ENCODE measurements at regions of chr1 and their contacts with region 1.

Region 1: DNA sequence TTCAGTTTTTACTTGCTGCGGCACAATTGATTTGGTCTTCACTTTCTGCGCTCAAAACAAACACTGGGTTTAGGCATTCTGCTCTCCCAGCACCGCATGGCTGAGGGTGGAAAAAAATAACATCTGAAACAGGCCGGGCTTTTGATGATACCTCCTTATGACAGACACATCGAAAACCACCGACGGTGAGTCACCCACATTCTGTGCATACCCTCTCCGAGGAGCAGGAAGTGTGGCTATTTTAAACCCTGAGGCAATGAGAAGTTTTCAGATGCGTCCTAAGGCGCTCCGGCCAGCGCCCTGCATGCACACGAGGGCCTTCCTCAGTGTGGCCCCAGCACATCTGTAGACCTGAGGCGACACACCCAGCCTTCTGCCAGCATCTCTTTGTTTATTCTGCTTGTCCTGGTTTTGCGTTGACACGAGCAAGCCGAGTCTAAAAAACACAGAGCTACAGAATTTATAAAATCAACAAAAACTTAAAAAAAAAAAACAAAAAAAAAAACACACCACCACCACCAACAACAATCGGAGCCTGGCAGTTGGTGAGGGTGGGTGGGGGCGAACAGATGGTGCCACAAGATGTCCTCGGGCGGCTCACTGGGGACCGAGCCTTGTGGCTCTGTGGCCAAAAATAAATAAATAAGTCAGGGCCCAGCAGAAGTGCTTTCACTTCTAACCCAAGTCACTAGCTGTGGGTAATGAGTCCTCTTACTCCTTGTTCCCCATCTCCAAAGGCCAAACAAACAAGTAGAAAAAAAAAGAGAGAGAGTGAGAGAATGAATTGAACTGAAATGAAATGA is 162.6 kb upstream of the IRF2BP2 start:
- DNase-seq: peak; percentile 95
- H3K4me3 Mint-ChIP-seq: peak overlapping the region; percentile 65
- H3K27ac Mint-ChIP-seq: peak overlapping the region; percentile 95
- H3K4me1 Mint-ChIP-seq: peaks cover 54% of the 10 kb centered on the region
- H3K27me3 Mint-ChIP-seq: no peaks in the 10 kb centered on the region

Region 2: DNA sequence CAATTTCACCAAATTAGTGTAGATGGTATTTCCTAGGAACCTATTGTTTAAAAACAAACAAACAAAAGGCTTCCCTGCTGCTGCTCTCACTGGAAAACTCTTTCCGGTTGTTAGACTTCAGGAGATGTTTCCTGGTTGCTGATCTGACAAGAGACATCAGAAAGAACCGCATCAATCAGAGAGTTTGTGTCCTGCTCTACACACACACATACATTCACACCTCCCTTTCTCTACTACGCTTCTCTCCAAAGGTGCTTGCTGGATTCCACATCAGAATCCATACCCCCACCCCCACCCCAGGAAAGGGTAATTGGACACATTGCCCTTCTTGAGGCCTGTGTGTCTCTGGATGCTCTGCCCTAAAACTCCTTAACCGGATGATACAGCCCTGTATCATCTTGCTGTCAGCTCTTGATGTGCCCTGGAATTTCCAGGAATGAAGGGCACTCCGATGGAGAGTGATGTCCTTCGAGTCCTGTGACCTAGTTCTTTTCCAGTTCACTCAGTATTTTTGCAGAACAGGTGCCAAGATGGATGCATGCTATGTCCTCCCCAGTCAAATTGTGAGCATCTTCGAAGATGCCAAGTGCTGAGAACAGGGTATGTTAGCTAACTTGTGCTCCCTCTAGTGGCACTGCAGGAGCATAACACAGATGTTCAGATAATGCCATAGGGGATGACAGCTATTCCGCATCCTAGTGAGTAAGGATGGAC is 981.7 kb before region 1 on chr1:
- intact Hi-C with region 1: no loop called
- DNase-seq: peak; percentile 76
- H3K4me3 Mint-ChIP-seq: no peak overlapping the region
- H3K27ac Mint-ChIP-seq: no peak overlapping the region
- H3K4me1 Mint-ChIP-seq: no peaks in the 10 kb centered on the region
- H3K27me3 Mint-ChIP-seq: peaks cover 5% of the 10 kb centered on the region

Region 3: GRCh38 chr1:234722904-234723720 is 49.4 kb before region 1 on chr1:
- intact Hi-C with region 1: loop called (anchors 1 kb)
- DNase-seq: peak; percentile 66
- H3K4me3 Mint-ChIP-seq: peak overlapping the region; percentile 76
- H3K27ac Mint-ChIP-seq: peak overlapping the region; percentile 96
- H3K4me1 Mint-ChIP-seq: peaks cover 82% of the 10 kb centered on the region
- H3K27me3 Mint-ChIP-seq: peaks cover 2% of the 10 kb centered on the region

Region 4: DNA sequence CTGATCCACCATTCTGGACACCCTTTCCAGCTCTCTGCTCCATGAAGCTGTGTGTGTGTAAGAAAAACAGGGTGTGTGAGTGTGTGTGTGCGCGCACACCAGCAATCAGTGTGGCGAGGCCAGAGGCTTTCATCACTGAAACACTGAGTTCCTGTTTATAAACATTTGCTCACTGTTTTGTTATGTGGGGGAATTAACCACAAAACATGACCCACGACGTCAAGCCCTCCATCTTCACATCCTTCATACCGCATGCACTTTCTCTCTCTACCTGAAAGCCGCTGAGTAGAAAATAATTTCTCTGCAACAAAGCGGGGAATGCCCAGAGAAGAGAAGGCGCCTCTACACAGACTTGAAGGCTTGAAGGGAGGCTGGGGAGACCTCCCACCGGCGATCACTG is 13.7 kb before region 1 on chr1:
- intact Hi-C with region 1: loop called (anchors 2 kb)
- DNase-seq: peak; percentile 86
- H3K4me3 Mint-ChIP-seq: peak overlapping the region; percentile 62
- H3K27ac Mint-ChIP-seq: peak overlapping the region; percentile 93
- H3K4me1 Mint-ChIP-seq: peaks cover 37% of the 10 kb centered on the region
- H3K27me3 Mint-ChIP-seq: peaks cover 6% of the 10 kb centered on the region

Region 5: GRCh38 chr1:234862944-234863515 is 90.5 kb after region 1 on chr1:
- intact Hi-C with region 1: no loop called
- DNase-seq: no peak
- H3K4me3 Mint-ChIP-seq: no peak overlapping the region
- H3K27ac Mint-ChIP-seq: peak overlapping the region; percentile 20
- H3K4me1 Mint-ChIP-seq: peaks cover 30% of the 10 kb centered on the region
- H3K27me3 Mint-ChIP-seq: no peaks in the 10 kb centered on the region

Region 6: GRCh38 chr1:234925440-234926263 is 153.1 kb after region 1 on chr1:
- intact Hi-C with region 1: loop called (anchors 1 kb)
- DNase-seq: peak; percentile 78
- H3K4me3 Mint-ChIP-seq: peak overlapping the region; percentile 83
- H3K27ac Mint-ChIP-seq: peak overlapping the region; percentile 95
- H3K4me1 Mint-ChIP-seq: peaks cover 59% of the 10 kb centered on the region
- H3K27me3 Mint-ChIP-seq: no peaks in the 10 kb centered on the region

Region 7: DNA sequence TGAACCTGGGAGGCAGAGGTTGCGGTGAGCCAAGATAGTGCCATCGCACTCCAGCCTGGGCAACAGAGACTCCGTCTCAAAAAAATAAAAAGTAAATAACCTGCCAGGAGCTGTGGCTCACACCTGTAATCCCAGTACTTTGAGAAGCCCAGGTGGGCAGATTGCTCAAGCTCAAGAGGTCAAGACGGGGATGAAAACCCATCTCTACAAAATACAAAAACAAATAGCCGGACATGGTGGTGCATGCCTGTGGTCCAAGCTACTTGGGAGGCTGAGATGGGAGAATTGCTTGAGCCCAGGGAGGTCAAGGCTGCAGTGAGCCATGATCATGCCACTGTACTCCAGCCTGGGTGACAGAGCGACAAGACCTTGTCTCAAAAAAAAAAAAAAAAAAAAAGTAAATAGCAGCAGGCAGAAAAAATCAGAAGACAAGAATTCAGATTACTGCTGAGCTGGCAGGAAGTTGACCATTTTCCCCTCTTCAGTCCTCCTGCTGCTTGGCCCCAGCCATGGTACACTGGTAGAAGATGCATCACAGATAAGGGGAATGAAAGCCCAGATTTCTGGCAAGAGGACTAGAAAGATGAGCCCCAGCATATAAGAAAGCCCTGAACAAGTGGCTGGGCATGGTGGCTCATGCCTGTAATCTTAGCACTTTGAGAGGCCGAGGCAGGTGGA is 258.5 kb after region 1 on chr1:
- intact Hi-C with region 1: no loop called
- DNase-seq: no peak
- H3K4me3 Mint-ChIP-seq: no peak overlapping the region
- H3K27ac Mint-ChIP-seq: no peak overlapping the region
- H3K4me1 Mint-ChIP-seq: peaks cover 8% of the 10 kb centered on the region
- H3K27me3 Mint-ChIP-seq: no peaks in the 10 kb centered on the region

Region 8: GRCh38 chr1:235075188-235075926 is 302.8 kb after region 1 on chr1:
- intact Hi-C with region 1: loop called (anchors 2 kb)
- DNase-seq: peak; percentile 82
- H3K4me3 Mint-ChIP-seq: peak overlapping the region; percentile 69
- H3K27ac Mint-ChIP-seq: peak overlapping the region; percentile 100
- H3K4me1 Mint-ChIP-seq: peaks cover 31% of the 10 kb centered on the region
- H3K27me3 Mint-ChIP-seq: no peaks in the 10 kb centered on the region